Esophagus muscularis mucosa (tissue), 4 donors: ENCODE measurements at regions of chr19 and their contacts with region 1.

Region 1: DNA sequence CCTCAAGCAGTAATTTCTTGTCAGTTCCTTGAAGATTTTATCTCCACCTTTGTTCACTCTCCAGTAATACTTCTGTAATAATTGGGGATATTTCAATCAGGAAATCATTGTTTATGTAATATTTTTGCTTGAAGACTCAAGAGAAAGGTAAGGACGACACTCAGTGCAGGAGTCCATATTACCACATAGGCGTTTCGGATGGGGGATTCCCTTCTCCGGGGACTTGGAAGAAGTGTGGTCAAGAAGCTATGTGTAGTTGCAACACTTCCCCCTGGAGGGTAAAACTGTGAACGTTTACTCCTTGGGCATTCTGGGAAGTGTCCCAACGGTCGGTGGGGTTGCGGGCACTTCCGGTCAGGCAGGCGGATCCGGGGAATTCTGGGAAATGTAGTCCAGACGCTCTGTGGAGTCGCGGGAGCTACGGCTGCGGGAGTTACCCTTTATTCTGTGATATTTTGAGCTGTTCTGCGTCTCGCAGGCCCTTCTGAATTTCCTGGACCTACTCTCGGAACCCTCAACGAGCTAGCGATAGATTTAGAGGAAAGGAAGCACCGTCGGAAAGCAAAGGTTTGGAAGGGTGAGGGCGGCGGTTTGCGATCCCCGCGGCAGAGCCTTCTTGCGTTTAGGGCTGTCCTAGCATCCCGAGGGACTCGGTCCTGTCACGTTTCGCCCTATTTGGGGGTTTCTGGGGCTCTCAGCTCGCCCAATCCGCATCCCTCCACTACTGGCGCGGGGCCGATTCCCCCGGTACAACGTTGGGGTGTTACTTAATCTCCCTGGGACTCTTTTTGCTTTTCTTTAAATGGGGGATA is at the start of gene ZNF221:
- DNase-seq: peak; percentile 95
- H3K4me3 ChIP-seq: peak within 1 kb of the TSS; percentile 63 to 74 (median 72)
- H3K27ac ChIP-seq: peak within 1 kb of the TSS; percentile 73 to 86 (median 80)
- H3K4me1 ChIP-seq: peaks cover 0 to 7% (median 1%) of the 10 kb centered on the region in 4 donors
- H3K27me3 ChIP-seq: peaks cover 0 to 4% (median 0%) of the 10 kb centered on the region in 4 donors
- CTCF ChIP-seq: peak; percentile 37 to 58 (median 57)
- EP300 ChIP-seq: no peak
- POLR2A ChIP-seq: no peak
- total RNA-seq, gene ZNF221: 3.5 to 7.1 (median 5.2) TPM

Region 2: GRCh38 chr19:43826787-43827754 is 124.0 kb before region 1 on chr19 and contains the start of gene ZNF283:
- intact Hi-C with region 1: loop called (anchors 5 kb)
- DNase-seq: peak; percentile 95
- H3K4me3 ChIP-seq: peak within 1 kb of the TSS; percentile 63 to 77 (median 70)
- H3K27ac ChIP-seq: peak within 1 kb of the TSS; percentile 70 to 82 (median 73)
- H3K4me1 ChIP-seq: peaks cover 10 to 13% (median 13%) of the 10 kb centered on the region in 4 donors
- H3K27me3 ChIP-seq: no peaks in the 10 kb centered on the region
- CTCF ChIP-seq: peak in 1 of 3 experiments; percentile 12
- EP300 ChIP-seq: no peak
- POLR2A ChIP-seq: no peak
- total RNA-seq, gene ZNF283: 6.4 to 11.5 (median 7.5) TPM